ENCODE measurements at regions of chr9 and their contacts with region 1.

Region 1: GRCh38 chr9:18331808-18332209 is 142.1 kb upstream of the ADAMTSL1 start:
- DNase-seq: no peak
- ATAC-seq: no peak
- H3K4me3 ChIP-seq: no peak overlapping the region
- H3K4me3 Mint-ChIP-seq: no peak overlapping the region
- H3K27ac ChIP-seq: no peak overlapping the region
- H3K27ac Mint-ChIP-seq: no peak overlapping the region
- H3K4me1 ChIP-seq: no peaks in the 10 kb centered on the region
- H3K4me1 Mint-ChIP-seq: no peaks in the 10 kb centered on the region
- H3K27me3 ChIP-seq: no peaks in the 10 kb centered on the region
- H3K27me3 Mint-ChIP-seq: peaks cover 0 to 4% of the 10 kb centered on the region in 2 donors
- CTCF ChIP-seq: no peak

Region 2: GRCh38 chr9:18393340-18394130 is 61.7 kb after region 1 on chr9:
- intact Hi-C with region 1: loop called (anchors 10 kb)
- DNase-seq: no peak
- ATAC-seq: no peak
- H3K4me3 ChIP-seq: no peak overlapping the region
- H3K4me3 Mint-ChIP-seq: no peak overlapping the region
- H3K27ac ChIP-seq: no peak overlapping the region
- H3K27ac Mint-ChIP-seq: no peak overlapping the region
- H3K4me1 ChIP-seq: no peaks in the 10 kb centered on the region
- H3K4me1 Mint-ChIP-seq: no peaks in the 10 kb centered on the region
- H3K27me3 ChIP-seq: no peaks in the 10 kb centered on the region
- H3K27me3 Mint-ChIP-seq: no peaks in the 10 kb centered on the region
- CTCF ChIP-seq: no peak

Measured in natural killer cell (primary cell).